CD8-positive, alpha-beta T cell (primary cell): ENCODE measurements at regions of chr1 and their contacts with region 1.

Region 1: DNA sequence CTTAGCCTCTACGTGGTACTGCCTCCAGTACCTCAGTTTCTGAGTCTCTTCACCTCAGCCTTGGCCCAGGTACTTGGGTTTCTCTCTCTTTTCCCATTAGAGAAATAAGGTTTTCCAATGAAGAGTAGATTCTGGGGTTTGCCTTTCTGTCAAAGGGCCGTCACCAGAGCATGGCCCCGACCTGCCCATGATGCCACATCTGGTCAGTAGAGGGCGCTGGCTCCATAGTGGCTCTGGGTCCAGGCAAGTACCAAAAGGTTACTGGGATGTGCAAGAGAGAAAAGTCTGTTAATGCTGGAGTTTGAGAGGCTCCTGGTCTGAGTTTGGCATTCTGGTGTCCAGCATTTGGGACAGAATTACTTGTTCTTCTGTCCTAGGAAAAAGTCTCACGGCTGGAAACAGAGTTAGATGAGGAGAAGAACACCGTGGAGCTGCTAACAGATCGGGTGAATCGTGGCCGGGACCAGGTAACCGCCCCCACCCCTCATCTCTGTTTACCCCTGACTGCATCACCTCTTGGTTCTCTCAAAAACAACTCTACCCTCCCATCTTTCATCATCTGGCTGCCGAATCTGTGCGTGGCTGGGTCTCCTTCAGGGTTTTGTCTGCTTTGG is 5.3 kb upstream of the TUFT1 start:
- DNase-seq: peak; percentile 58 to 83 (median 75)
- ATAC-seq: peak; percentile 88
- H3K4me3 ChIP-seq: no peak overlapping the region
- H3K4me3 Mint-ChIP-seq: no peak overlapping the region
- H3K27ac ChIP-seq: no peak overlapping the region
- H3K27ac Mint-ChIP-seq: no peak overlapping the region
- H3K4me1 ChIP-seq: peaks cover 6% of the 10 kb centered on the region
- H3K4me1 Mint-ChIP-seq: peaks cover 5% of the 10 kb centered on the region
- H3K27me3 ChIP-seq: no peaks in the 10 kb centered on the region
- H3K27me3 Mint-ChIP-seq: no peaks in the 10 kb centered on the region
- CTCF ChIP-seq: peak; percentile 82

Region 2: DNA sequence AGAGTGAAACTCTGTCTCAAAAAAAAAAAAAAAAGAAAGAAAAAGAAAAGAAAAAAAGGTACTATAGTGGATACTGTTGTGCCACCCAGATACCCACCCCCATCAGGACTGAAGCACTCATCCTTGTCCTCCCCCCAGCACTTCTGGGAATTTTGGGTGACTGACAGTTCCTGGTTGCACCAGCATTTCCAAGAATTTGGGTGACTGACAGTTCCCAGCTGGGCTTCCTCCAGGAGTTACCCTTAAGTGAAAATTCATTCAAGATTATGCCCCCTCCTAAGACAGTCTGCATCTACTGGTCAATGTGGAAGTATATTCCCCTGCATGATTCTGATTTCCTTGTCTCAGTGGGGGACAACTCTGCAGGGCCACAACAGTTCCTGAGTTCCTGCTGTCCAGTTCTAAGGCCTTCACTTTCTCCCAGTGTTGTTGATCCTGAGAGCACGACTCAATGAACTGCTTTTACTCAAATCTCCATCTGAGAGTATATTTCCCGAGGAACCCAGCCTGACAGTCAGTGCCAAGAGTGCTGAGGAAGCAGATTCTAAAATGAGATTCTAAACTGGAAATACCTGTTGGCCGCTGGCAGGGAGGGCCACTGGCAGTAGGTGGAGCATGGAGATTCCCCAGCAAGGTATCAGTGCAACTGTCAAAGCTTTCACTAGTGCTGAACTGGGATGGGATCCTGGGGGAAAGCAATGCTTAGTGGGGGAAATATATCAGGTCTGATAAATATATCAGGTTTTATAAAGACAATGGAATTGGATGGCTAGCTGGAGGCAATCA is 205.0 kb after region 1 on chr1:
- CTCF ChIA-PET with region 1: interaction called, 3 read pairs
- POLR2A ChIA-PET with region 1: no interaction called
- intact Hi-C with region 1: loop called in 1 of 2 experiments (anchors 1 kb)
- DNase-seq: no peak
- ATAC-seq: no peak
- H3K4me3 ChIP-seq: no peak overlapping the region
- H3K4me3 Mint-ChIP-seq: no peak overlapping the region
- H3K27ac ChIP-seq: no peak overlapping the region
- H3K27ac Mint-ChIP-seq: no peak overlapping the region
- H3K4me1 ChIP-seq: no peaks in the 10 kb centered on the region
- H3K4me1 Mint-ChIP-seq: no peaks in the 10 kb centered on the region
- H3K27me3 ChIP-seq: no peaks in the 10 kb centered on the region
- H3K27me3 Mint-ChIP-seq: peaks cover 3% of the 10 kb centered on the region
- CTCF ChIP-seq: no peak